Spleen (tissue), 13 donors: ENCODE measurements at regions of chr17 and their contacts with region 1.

Region 1: GRCh38 chr17:29148790-29149430 is 31.3 kb downstream of the MYO18A start:
- DNase-seq: peak; percentile 99
- H3K4me3 ChIP-seq: peak overlapping the region; percentile 14 to 70 (median 42)
- H3K27ac ChIP-seq: peak overlapping the region; percentile 67 to 88 (median 82)
- H3K4me1 ChIP-seq: peaks cover 25 to 77% (median 51%) of the 10 kb centered on the region in 6 donors
- H3K27me3 ChIP-seq: peaks cover 0 to 3% (median 0%) of the 10 kb centered on the region in 7 donors
- CTCF ChIP-seq: peak; percentile 96 to 100 (median 99)
- POLR2A ChIP-seq: peak in 1 of 3 donors; percentile 10

Region 2: DNA sequence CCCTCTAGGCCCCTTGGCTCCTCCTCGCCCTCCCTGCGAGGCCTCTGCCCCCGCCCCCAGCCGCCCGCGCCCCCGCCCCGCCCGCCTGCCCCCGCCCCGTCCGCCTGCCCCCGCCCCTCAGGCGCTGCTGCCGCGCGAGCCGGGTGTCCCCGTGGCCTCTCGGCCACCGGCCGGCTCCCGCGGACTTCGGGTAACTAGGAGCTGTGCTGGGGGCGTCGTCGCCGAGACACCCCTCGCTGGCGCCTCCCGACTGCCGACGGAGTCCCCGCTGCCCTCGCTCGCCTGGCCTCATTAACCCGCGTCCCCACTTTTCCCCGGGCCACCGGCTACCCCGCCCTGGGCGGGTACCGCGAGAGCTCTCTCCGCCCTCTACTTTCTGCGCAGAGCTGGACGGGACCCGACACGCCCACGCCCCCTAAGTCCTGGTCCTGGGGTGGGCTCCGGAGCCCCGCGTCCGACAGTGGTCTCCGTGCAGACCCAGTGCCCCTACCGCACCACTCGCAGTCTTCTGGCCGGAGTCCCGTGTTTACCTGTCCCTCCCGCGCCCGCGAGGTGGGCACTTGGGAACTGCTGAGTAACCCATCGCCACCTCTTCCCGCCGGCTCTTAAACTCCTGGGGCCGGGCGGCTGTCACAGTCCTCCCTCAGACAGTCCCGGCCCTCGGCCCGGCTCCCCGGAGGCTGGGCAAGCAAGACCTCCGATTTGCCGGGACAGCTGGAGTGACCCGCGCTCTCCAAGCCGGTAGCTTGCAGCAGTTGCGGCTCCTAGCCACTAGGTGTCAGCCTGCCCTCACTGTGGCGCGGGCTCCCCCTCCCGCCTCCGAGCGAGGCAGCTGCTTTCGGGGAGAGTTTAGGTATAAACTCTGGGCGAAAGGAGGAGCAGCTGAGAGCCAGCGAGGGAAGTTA is 422.4 kb before region 1 on chr17 and contains the start of gene TLCD1:
- intact Hi-C with region 1: no loop called
- DNase-seq: peak; percentile 99
- H3K4me3 ChIP-seq: peak within 1 kb of the TSS; percentile 64 to 92 (median 74)
- H3K27ac ChIP-seq: peak within 1 kb of the TSS; percentile 51 to 99 (median 98)
- H3K4me1 ChIP-seq: peaks cover 32 to 81% (median 72%) of the 10 kb centered on the region in 6 donors
- H3K27me3 ChIP-seq: no peaks in the 10 kb centered on the region
- CTCF ChIP-seq: peak; percentile 98 to 100 (median 100)
- POLR2A ChIP-seq: no peak
- total RNA-seq, gene TLCD1: 0.97 to 2.6 (median 2.0) TPM in 6 of 7 donors, not detected in the other

Region 3: GRCh38 chr17:29219378-29220047 is 70.6 kb after region 1 on chr17:
- intact Hi-C with region 1: loop called (anchors 5 kb)
- DNase-seq: peak; percentile 81
- H3K4me3 ChIP-seq: no peak overlapping the region
- H3K27ac ChIP-seq: no peak overlapping the region
- H3K4me1 ChIP-seq: peaks cover 0 to 10% (median 8%) of the 10 kb centered on the region in 6 donors
- H3K27me3 ChIP-seq: peaks cover 0 to 6% (median 0%) of the 10 kb centered on the region in 7 donors
- CTCF ChIP-seq: peak; percentile 74 to 96 (median 93)
- POLR2A ChIP-seq: no peak

Region 4: DNA sequence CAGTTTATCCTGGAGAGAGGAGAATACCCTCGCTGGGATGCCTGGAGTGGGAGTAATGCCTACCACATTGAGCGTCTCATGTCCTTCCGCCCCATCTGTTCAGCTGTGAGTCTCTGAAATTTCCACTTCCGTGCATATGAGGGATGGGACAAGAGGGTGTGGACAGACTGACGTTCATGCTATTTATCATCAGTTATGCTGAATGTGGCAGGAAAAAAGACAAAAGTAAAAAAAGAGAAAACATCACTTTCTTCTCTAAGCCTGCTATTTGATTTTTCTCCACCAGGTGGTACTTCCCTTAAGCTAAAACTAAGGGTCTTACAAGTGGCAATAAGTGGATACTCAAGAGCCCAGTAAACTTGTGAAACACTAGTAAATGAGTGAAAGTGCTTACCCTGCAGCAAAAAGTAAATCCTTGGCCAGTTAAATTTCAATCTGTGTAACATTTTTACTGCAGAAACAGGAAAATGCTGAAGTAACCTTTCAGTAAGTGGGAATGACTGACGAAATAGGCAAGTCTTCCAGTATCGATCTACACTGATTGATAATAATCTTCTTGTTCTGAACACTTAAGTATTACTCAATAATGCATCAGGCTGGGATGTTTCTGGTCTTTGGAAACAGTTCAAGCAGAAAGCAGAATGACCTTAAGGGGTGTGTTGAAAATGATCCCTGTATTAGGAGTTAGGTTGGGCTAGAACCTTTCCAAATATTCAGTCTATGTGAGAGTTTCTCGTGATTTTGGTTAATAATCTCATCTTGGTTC is 103.4 kb after region 1 on chr17:
- intact Hi-C with region 1: no loop called
- DNase-seq: no peak
- H3K4me3 ChIP-seq: no peak overlapping the region
- H3K27ac ChIP-seq: no peak overlapping the region
- H3K4me1 ChIP-seq: peaks cover 9 to 47% (median 33%) of the 10 kb centered on the region in 6 donors
- H3K27me3 ChIP-seq: no peaks in the 10 kb centered on the region
- CTCF ChIP-seq: peak in 7 of 11 experiments; percentile 10 to 54 (median 47)
- POLR2A ChIP-seq: no peak

Region 5: DNA sequence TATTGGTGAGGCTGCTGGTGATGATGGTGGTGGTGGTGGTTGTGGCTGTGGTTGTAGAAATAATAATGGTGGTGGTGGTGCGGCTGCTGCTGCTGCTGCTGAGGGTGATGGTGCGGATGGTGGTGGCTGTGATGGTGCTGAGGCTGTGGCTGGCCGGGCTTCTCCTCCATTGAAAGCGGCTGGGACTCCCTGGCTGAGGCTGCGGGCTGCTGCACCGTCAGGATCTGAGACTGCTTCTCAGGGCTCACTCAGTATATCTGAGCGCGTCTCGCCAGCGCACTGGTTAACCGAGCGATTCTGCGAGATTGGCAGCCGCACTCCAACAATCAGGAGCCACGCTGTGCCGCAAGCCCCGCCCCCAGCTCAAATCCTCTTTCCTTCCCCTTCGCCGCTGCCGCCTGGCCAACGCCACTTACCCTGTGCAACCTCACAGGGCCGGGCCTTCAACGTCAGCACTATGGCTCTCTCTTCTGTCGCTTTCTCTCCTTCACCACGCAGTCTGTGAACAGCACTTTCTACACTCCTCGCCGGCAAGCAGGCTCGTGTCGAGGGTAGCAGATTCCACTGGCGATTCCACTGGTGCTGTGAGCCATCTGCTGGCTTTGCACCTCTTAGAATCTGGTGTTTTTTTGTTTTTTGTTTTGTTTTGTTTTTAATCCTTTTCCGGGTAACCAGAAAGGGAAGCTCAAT is 145.1 kb after region 1 on chr17 and contains the start of gene NUFIP2:
- intact Hi-C with region 1: loop called (anchors 10 kb)
- DNase-seq: peak; percentile 99
- H3K4me3 ChIP-seq: peak within 1 kb of the TSS; percentile 81 to 99 (median 98)
- H3K27ac ChIP-seq: peak within 1 kb of the TSS; percentile 95 to 100 (median 99)
- H3K4me1 ChIP-seq: peaks cover 36 to 49% (median 41%) of the 10 kb centered on the region in 6 donors
- H3K27me3 ChIP-seq: no peaks in the 10 kb centered on the region
- CTCF ChIP-seq: peak in 3 of 11 experiments; percentile 11 to 46 (median 27)
- POLR2A ChIP-seq: peak; percentile 93 to 100 (median 98)
- total RNA-seq, gene NUFIP2: 50.9 to 68.4 (median 58.6) TPM